GM13976 (cell line): ENCODE measurements at regions of chr12 and their contacts with region 1.

Region 1: GRCh38 chr12:130761537-130762318 is 45.6 kb upstream of the RIMBP2 start:
- DNase-seq: peak; percentile 85
- CTCF ChIP-seq: peak; percentile 58

Region 2: DNA sequence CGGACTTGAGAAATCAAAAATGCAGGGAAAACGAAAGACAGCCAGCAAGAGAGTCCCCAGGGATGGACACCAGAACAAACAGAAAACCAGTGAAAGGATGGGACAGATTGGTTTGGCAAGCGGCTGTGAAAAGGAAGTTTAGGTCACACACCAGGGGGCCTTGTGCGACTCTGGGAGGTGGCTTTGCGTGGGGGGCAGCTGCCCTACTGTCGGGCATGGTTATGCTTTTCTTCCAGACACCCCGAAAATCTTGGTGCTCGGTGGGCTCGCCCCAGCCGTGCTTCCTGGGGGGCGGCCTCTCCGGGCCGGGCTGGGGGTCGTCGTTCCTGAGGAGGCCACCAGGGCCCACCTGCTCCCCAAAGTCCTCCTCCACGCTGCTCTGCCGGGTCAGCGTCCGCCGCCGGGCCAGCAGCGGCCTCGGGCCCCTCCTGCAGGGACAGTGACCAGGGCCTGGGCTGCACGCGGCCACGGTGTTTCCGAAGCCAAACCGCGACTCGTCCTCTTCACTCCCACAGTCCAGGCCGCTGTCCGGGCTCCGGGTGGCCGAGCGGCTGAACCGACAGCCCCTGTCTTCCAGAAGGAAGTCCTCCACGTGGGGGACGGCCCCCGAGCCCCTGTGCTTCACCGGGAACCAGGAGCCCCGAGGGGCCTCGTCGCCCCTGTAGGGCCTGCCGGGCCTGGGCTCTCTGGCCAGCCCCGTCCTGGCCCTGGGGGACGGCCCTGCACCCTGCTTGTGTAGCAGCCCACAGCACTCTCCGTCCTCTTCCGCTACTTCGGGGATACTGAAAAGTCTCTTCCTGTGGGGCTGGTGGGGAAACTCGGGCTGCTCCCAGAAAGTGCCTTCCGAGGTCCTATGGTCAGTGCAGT is 337.5 kb before region 1 on chr12:
- in situ Hi-C with region 1: no loop called
- DNase-seq: no peak
- CTCF ChIP-seq: no peak

Region 3: GRCh38 chr12:130498589-130499385 is 262.9 kb before region 1 on chr12:
- in situ Hi-C with region 1: no loop called
- DNase-seq: no peak
- CTCF ChIP-seq: no peak

Region 4: GRCh38 chr12:130818635-130819576 is 57.2 kb after region 1 on chr12:
- in situ Hi-C with region 1: loop called (anchors 10 kb)
- DNase-seq: peak; percentile 95
- CTCF ChIP-seq: peak; percentile 95